ENCODE measurements at regions of chr3 and their contacts with region 1.

Region 1: GRCh38 chr3:141441381-141442364 is 45.2 kb upstream of the RASA2 start:
- DNase-seq: peak; percentile 87
- ATAC-seq: peak; percentile 98
- H3K4me3 Mint-ChIP-seq: no peak overlapping the region
- H3K27ac Mint-ChIP-seq: peak overlapping the region; percentile 76
- H3K4me1 Mint-ChIP-seq: peaks cover 25% of the 10 kb centered on the region
- H3K27me3 Mint-ChIP-seq: no peaks in the 10 kb centered on the region

Region 2: DNA sequence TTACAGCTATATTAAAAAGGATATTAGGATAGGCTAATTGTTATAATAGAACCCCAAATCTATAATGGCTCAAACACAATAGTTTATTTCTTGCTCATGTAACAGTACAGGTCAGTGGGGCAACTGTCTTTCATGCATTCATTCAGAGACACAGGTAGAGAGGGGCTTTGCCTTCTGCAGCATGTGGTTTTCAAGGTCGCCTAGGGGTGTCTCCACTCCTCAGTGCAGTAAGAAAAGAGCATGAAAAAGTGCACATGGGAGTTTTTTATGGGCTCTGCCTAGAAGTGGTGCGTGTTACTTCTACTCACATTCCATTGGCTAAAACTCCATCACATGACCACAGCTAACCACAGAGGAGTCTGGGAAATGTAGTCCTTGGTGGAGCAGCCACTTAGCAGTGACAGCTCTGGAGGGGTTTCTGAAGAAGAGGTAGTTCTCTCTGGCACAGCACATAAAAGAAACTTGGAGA is 71.6 kb before region 1 on chr3:
- CTCF ChIA-PET with region 1: interaction called, 30 read pairs
- POLR2A ChIA-PET with region 1: interaction called, 4 read pairs
- intact Hi-C with region 1: loop called (anchors 1 to 2 kb)
- DNase-seq: peak; percentile 68
- ATAC-seq: peak; percentile 96
- H3K4me3 Mint-ChIP-seq: no peak overlapping the region
- H3K27ac Mint-ChIP-seq: peak overlapping the region; percentile 35
- H3K4me1 Mint-ChIP-seq: peaks cover 32% of the 10 kb centered on the region
- H3K27me3 Mint-ChIP-seq: no peaks in the 10 kb centered on the region

Region 3: GRCh38 chr3:141402476-141403171 is 39.0 kb before region 1 on chr3:
- CTCF ChIA-PET with region 1: interaction called, 4 read pairs
- POLR2A ChIA-PET with region 1: no interaction called
- intact Hi-C with region 1: loop called in 1 of 2 experiments (anchors 5 kb)
- DNase-seq: peak; percentile 65
- ATAC-seq: peak; percentile 66
- H3K4me3 Mint-ChIP-seq: peak overlapping the region; percentile 84
- H3K27ac Mint-ChIP-seq: peak overlapping the region; percentile 88
- H3K4me1 Mint-ChIP-seq: peaks cover 60% of the 10 kb centered on the region
- H3K27me3 Mint-ChIP-seq: no peaks in the 10 kb centered on the region

Region 4: DNA sequence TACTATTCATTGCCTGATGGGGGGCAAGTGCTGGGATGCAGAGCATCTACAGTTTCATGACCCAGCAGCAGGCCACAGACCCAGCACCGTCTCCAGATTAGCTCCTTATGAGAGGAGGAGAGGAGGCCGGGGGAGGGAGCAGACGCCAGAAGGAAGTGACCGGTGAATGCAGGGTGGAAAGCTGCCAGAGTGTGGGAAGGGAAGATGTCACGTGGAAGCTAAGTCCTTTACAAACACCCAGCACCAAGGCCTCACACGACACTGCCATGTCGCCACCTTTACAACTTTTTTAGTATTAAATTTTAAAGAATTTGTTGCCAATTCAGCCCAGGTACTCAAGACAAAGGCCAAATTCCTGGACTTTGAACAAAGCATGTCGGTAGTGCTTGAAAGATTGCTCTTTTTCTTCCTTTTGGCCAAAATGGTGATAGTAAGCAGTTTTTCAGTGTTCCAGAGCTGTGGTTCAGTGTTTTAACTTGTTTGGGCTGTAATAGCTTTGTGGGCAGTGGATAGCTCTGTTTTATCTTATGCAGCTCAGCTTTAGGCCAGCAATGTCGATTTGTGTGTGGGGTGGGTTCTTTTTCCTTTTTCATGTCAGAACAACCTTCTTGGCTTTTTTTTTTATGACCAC is 15.2 kb before region 1 on chr3:
- CTCF ChIA-PET with region 1: interaction called, 43 read pairs
- POLR2A ChIA-PET with region 1: interaction called, 5 read pairs
- intact Hi-C with region 1: no loop called
- DNase-seq: no peak
- ATAC-seq: no peak
- H3K4me3 Mint-ChIP-seq: no peak overlapping the region
- H3K27ac Mint-ChIP-seq: peak overlapping the region; percentile 34
- H3K4me1 Mint-ChIP-seq: peaks cover 21% of the 10 kb centered on the region
- H3K27me3 Mint-ChIP-seq: no peaks in the 10 kb centered on the region

Measured in activated CD4-positive, alpha-beta T cell treated with anti-CD3 and anti-CD28 coated beads for 36 hours (primary cell).